GM10248 (cell line): ENCODE measurements at regions of chr7 and their contacts with region 1.

Region 1: GRCh38 chr7:97104719-97105238 is 12.7 kb upstream of the SDHAF3 start:
- DNase-seq: peak; percentile 71
- CTCF ChIP-seq: peak; percentile 91

Region 2: DNA sequence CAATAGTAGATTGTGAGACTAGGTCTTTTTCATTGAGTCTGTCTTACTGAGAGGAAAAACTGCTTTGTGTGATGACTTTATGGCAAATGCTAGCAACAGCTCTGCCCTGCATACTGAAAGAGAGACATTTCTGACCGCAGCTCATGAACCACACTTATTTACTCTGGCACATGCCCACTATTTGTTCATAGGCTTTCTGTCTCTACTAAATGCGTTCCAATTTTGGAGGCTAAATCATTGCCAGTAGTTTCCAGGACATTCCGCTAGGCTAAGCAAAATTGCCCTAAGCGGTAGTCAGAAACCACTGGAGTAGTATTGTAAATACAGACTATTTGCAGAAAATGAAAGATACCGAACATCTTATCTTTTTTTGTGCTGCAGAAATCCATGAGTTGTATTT is 155.0 kb before region 1 on chr7:
- CTCF ChIA-PET with region 1: no interaction called
- POLR2A ChIA-PET with region 1: no interaction called
- DNase-seq: no peak
- CTCF ChIP-seq: no peak

Region 3: GRCh38 chr7:97117372-97118188 is 12.8 kb after region 1 on chr7 and contains the start of gene SDHAF3:
- CTCF ChIA-PET with region 1: interaction called, 23 read pairs
- POLR2A ChIA-PET with region 1: no interaction called
- DNase-seq: peak; percentile 95
- CTCF ChIP-seq: no peak

Region 4: DNA sequence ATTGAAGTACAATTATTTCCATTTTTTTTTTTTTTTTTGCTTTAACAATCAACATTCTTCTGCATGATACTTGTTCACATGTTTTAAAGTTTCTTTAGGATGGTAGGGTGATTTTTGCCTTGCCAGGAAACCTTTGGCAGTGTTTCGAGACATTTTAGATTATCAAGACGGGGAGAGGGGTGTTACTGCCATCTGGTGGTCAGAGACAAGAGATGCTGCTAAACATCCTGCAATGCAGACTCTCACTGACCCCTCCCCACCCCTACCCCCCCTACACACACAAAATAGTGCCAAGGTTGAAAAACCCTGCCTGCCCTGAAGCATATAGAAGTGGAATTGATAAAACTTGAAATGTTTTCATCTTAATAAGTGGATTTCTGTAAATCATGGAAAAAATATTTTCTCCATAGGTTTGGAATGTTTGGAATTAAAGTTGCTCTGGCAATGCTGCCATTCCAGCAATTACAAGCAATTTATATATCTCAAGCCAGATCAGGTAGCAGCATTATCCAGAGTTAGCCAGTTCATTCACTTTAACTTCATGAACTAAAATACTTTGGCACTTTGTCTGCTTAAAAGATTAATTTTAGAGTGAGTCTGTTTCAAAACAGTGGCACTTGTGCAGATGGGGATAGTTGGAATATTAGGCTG is 74.8 kb after region 1 on chr7:
- CTCF ChIA-PET with region 1: interaction called, 14 read pairs
- POLR2A ChIA-PET with region 1: no interaction called
- DNase-seq: peak; percentile 60
- CTCF ChIP-seq: peak; percentile 67

Region 5: GRCh38 chr7:97601941-97602457 is 497.2 kb after region 1 on chr7:
- CTCF ChIA-PET with region 1: no interaction called
- POLR2A ChIA-PET with region 1: no interaction called
- DNase-seq: no peak
- CTCF ChIP-seq: no peak

Region 6: DNA sequence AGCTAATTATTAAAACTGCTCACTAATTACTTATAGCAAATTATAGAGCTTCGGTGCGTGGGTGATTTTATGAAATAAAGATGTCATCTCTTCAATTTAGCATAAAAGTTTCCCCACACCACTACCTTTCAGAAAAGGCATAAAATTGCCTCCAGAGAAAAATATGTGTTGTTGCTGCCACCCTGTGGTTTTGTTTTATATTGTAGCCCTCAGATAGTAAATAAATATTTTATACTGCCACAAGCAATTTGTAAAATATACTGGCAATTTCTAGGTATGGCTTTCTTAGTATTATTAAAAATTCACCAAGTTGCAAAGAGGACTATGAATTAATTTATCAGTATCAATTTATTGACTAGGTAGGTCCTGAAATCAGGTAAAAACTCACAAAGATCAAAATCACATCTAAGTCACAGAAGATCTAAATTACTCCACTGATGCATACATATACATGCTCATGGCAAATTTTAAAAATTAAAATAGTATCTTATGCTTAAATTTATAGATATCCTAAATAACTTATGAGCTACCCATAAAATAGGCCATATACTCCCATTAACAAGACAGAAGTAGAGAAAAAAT is 740.9 kb after region 1 on chr7:
- CTCF ChIA-PET with region 1: interaction called, 20 read pairs
- POLR2A ChIA-PET with region 1: no interaction called
- DNase-seq: no peak
- CTCF ChIP-seq: peak; percentile 37

Region 7: GRCh38 chr7:98149116-98149692 is 1044.4 kb after region 1 on chr7:
- CTCF ChIA-PET with region 1: no interaction called
- POLR2A ChIA-PET with region 1: no interaction called
- DNase-seq: no peak
- CTCF ChIP-seq: no peak